Activated naive CD4-positive, alpha-beta T cell treated with anti-CD3 and anti-CD28 coated beads, Interleukin-2, amount 10 ng/mL, durations not matched to agents 7 days and 5 days (primary cell): ENCODE measurements at regions of chr9 and their contacts with region 1.

Region 1: GRCh38 chr9:94860968-94861871 is 134.7 kb downstream of the AOPEP start:
- DNase-seq: peak; percentile 86
- H3K4me3 Mint-ChIP-seq: peak overlapping the region; percentile 53
- H3K27ac Mint-ChIP-seq: peak overlapping the region; percentile 91
- H3K4me1 Mint-ChIP-seq: peaks cover 47% of the 10 kb centered on the region
- H3K27me3 Mint-ChIP-seq: peaks cover 3% of the 10 kb centered on the region

Region 2: DNA sequence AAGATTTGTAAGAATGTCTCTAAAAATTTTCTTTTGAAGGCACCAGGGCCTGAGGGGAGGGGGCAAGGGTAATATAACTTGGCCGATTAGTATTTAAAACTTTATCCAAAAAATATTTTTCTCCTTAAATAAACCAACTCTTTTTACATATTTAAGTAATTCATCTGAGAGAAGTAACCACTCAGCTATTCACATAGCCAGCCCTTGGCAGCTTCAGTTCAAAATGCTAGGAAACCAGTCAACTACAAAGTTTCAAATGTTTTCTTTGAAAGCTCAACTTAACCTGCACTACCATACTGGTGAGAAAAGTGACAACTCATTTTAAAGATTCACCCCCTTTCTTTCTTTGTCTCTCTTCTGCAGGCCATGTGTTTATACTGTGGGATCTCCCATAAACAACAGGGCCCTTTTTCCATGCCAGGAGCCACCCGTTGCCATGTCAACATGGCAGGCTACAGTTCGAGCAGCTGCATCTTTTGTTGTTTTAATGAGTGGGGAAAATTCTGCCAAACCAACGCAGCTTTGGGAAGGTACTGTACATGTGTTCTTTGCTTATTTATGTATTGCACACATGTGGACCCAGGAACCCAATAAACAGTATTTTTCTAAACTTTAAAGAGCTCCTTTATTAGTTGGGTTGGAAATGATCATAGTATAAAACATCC is 88.4 kb before region 1 on chr9:
- CTCF ChIA-PET with region 1: no interaction called
- DNase-seq: no peak
- H3K4me3 Mint-ChIP-seq: no peak overlapping the region
- H3K27ac Mint-ChIP-seq: no peak overlapping the region
- H3K4me1 Mint-ChIP-seq: no peaks in the 10 kb centered on the region
- H3K27me3 Mint-ChIP-seq: no peaks in the 10 kb centered on the region

Region 3: DNA sequence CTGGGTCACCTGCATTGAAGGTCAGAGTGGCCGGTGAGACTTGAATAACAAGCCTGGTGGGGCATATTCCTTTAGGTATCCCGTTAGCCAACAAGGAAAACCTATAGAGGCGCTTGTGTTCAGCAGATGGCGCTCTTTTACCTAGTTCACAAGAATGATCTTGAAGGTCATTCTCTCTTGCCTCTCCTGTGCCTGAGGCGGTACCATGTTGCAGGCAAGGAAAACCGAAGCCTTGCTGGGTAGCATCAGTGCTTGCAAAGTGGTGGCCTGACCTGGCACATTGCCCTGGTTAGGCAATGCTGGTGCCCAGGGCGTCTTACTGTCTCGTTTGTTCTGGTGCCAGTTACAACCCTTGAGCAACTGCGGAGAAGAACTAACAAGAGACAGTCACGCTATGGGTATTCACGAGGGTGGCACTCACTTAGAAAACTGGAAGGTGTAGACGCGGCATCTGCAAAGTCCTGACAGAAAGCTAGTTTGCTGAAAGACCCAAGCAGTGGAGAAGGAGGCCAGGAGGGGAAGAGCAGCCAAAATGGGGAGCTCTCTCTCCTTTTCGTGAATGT is 78.0 kb before region 1 on chr9:
- CTCF ChIA-PET with region 1: no interaction called
- DNase-seq: peak; percentile 65
- H3K4me3 Mint-ChIP-seq: no peak overlapping the region
- H3K27ac Mint-ChIP-seq: no peak overlapping the region
- H3K4me1 Mint-ChIP-seq: peaks cover 7% of the 10 kb centered on the region
- H3K27me3 Mint-ChIP-seq: no peaks in the 10 kb centered on the region

Region 4: GRCh38 chr9:94879230-94879629 is 18.0 kb after region 1 on chr9:
- CTCF ChIA-PET with region 1: interaction called, 10 read pairs
- DNase-seq: no peak
- H3K4me3 Mint-ChIP-seq: peak overlapping the region; percentile 1
- H3K27ac Mint-ChIP-seq: peak overlapping the region; percentile 56
- H3K4me1 Mint-ChIP-seq: peaks cover 30% of the 10 kb centered on the region
- H3K27me3 Mint-ChIP-seq: no peaks in the 10 kb centered on the region